Gastrocnemius medialis (tissue), 4 donors: ENCODE measurements at regions of chr6 and their contacts with region 1.

Region 1: DNA sequence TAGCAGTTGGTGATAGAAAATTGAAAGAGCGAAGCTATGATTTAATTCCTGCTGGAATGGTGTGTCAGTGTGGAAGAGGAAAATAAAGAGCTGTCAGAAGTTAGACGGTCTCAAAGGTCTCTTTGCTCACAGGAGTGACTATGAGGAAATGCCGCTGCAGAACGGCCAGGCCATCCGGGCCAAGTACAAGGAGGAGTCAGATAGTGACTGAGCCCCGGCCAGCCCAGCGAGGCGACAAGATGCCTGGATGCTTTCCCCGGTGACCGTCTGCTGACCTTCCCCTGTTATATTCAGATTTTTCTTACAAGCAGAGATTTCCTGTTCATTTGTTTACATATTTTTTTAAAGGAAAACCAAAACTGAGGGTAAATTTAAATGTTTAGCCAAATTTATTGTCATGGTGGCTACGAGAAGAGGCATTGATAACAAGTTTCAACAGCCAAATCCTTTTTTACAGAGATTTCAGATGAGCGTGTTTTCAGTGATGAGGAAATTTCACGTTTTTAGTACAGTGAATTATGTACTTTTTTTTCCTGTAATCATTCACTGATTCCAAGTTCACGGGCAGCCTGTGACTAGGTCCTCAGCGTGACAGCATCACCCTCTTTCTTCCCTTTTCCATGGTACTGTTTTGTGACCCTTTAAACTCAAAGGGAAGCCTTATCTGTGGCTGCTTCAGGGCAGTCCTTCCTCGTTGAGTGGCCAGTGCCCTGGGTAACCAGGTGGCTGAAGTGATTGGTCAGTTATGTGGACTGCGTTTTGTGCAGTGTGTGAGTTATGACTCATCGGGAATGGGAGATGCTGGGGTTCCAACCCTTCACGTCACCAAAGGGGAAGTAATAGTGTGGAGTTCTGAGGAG is 12.6 kb downstream of the DYNLT1 start:
- DNase-seq: peak; percentile 76 to 91
- ATAC-seq: peak; percentile 82
- H3K4me3 ChIP-seq: peak overlapping the region in 1 of 4 donors; percentile 8
- H3K27ac ChIP-seq: peak overlapping the region; percentile 71 to 86 (median 80)
- H3K4me1 ChIP-seq: peaks cover 21 to 33% of the 10 kb centered on the region in 2 donors
- H3K27me3 ChIP-seq: no peaks in the 10 kb centered on the region
- CTCF ChIP-seq: peak in 1 of 5 experiments; percentile 3
- POLR2A ChIP-seq: peak in 1 of 2 donors; percentile 19

Region 2: GRCh38 chr6:158517581-158517980 is 114.3 kb before region 1 on chr6:
- in situ Hi-C with region 1: no loop called
- intact Hi-C with region 1: no loop called
- DNase-seq: no peak
- ATAC-seq: no peak
- H3K4me3 ChIP-seq: no peak overlapping the region
- H3K27ac ChIP-seq: no peak overlapping the region
- H3K4me1 ChIP-seq: no peaks in the 10 kb centered on the region
- H3K27me3 ChIP-seq: peaks cover 17 to 22% (median 20%) of the 10 kb centered on the region in 3 donors
- CTCF ChIP-seq: no peak
- POLR2A ChIP-seq: no peak

Region 3: DNA sequence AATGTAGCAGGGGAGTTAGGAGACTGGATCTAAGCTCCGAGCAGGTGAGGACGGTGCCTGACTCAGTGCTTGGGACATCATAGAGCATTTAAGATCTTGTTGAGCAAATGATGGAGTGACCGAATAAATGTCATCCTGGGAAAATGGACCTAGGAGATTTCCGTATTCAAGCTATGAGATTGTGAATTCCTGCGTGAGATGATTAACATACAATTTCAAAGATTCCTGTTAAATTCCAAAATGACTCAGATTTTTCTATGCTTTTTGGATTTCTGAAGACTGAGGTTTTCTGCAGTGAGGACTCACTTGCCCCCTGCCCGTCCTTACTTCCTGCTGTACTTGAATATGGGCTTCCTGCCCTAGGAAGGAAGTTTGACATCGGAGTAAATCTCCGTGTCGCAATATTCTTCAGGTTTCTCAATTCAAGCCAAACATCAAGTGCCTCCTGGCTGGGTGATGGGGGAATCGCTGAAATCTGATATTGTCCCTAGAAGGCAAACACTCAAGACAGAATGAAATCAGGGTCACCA is 23.1 kb after region 1 on chr6:
- in situ Hi-C with region 1: no loop called
- intact Hi-C with region 1: loop called (anchors 1 kb)
- DNase-seq: peak; percentile 64 to 81
- ATAC-seq: peak; percentile 86 to 87
- H3K4me3 ChIP-seq: peak overlapping the region in 1 of 4 donors; percentile 13
- H3K27ac ChIP-seq: peak overlapping the region; percentile 87 to 96 (median 91)
- H3K4me1 ChIP-seq: peaks cover 16 to 20% of the 10 kb centered on the region in 2 donors
- H3K27me3 ChIP-seq: no peaks in the 10 kb centered on the region
- CTCF ChIP-seq: no peak
- POLR2A ChIP-seq: no peak

Region 4: GRCh38 chr6:158686791-158687381 is 55.0 kb after region 1 on chr6:
- in situ Hi-C with region 1: loop called in 3 of 4 experiments (anchors 5 kb)
- intact Hi-C with region 1: loop called (anchors 1 kb)
- DNase-seq: no peak
- ATAC-seq: no peak
- H3K4me3 ChIP-seq: no peak overlapping the region
- H3K27ac ChIP-seq: no peak overlapping the region
- H3K4me1 ChIP-seq: peaks cover 9 to 12% of the 10 kb centered on the region in 2 donors
- H3K27me3 ChIP-seq: no peaks in the 10 kb centered on the region
- CTCF ChIP-seq: no peak
- POLR2A ChIP-seq: no peak

Region 5: GRCh38 chr6:158819213-158819909 is 187.5 kb after region 1 on chr6 and contains the start of gene EZR:
- in situ Hi-C with region 1: no loop called
- intact Hi-C with region 1: loop called (anchors 2 kb)
- DNase-seq: peak; percentile 34 to 70
- ATAC-seq: peak; percentile 44 to 53
- H3K4me3 ChIP-seq: peak within 1 kb of the TSS; percentile 81 to 88 (median 84)
- H3K27ac ChIP-seq: peak within 1 kb of the TSS; percentile 90 to 93 (median 92)
- H3K4me1 ChIP-seq: peaks cover 10 to 17% of the 10 kb centered on the region in 2 donors
- H3K27me3 ChIP-seq: no peaks in the 10 kb centered on the region
- CTCF ChIP-seq: no peak
- POLR2A ChIP-seq: peak; percentile 57 to 74
- total RNA-seq, gene EZR: 18.1 to 54.1 (median 33.6) TPM